ENCODE measurements at regions of chr11 and their contacts with region 1.

Region 1: GRCh38 chr11:77994412-77995362 is at the start of gene INTS4:
- DNase-seq: peak; percentile 99
- ATAC-seq: peak; percentile 99 to 100
- total RNA-seq, gene INTS4: 15.9 to 17.7 TPM

Region 2: GRCh38 chr11:77820563-77821348 is 173.9 kb before region 1 on chr11 and contains the starts of genes AAMDC and RSF1:
- intact Hi-C with region 1: loop called in 1 of 2 experiments (anchors 2 kb)
- DNase-seq: peak; percentile 99
- ATAC-seq: peak; percentile 92 to 93
- total RNA-seq, gene AAMDC: 70.9 to 77.5 TPM
- total RNA-seq, gene RSF1: 37.6 to 45.7 TPM

Region 3: GRCh38 chr11:78045851-78046485 is 51.3 kb after region 1 on chr11:
- intact Hi-C with region 1: loop called in 1 of 2 experiments (anchors 10 kb)
- DNase-seq: peak; percentile 85
- ATAC-seq: peak; percentile 89 to 95